CD4-positive, alpha-beta memory T cell (primary cell): ENCODE measurements at regions of chr15 and their contacts with region 1.

Region 1: DNA sequence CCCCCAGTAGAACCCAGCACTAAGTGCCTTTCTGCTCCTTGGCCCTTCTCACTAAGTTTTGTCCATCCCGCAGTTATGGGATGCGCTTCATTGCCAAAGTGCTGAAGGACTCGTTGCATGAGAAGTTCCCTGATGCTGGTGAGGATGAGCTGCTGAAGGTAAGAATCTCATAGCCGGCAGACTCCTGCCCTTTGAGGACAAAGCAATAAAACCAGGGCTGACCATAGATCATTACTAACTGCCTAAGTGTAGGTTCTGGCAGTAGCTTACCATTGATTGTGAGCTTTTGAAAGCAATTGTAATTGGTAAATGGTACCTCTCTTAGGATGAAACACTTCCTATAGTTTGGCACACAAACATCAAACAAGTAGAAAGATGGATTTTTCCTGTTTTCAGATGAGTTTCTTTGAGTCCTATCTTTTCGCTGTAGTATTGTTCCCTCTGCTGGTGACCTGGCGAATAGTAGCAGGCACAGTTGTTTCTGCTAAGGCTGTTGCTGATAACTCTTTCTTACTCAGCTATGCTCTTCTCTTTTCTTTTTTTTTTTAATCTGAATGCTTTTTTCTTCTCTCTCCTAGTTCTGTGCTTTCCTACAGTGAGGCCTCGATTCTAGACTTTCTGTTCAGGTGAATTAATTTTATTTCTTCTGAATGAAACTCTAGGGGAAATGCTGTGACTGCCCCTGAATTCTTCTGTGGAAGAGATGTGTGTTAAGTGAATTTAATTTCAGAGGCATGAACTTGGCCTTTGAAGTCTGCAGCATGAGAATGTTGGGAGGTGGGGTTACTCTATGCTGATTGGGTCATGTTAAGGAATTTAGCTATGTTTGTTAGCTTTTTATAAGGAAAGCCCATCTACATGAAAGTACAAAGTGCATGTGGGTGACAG is 47.4 kb upstream of the CRTC3 start:
- DNase-seq: peak; percentile 30 to 48 (median 47)
- H3K4me3 ChIP-seq: no peak overlapping the region
- H3K4me3 Mint-ChIP-seq: no peak overlapping the region
- H3K27ac ChIP-seq: no peak overlapping the region
- H3K27ac Mint-ChIP-seq: peak overlapping the region in 3 of 7 donors; percentile 59 to 73 (median 62)
- H3K4me1 ChIP-seq: peaks cover 33% of the 10 kb centered on the region
- H3K4me1 Mint-ChIP-seq: peaks cover 24 to 47% (median 37%) of the 10 kb centered on the region in 4 donors
- H3K27me3 ChIP-seq: no peaks in the 10 kb centered on the region
- H3K27me3 Mint-ChIP-seq: no peaks in the 10 kb centered on the region

Region 2: DNA sequence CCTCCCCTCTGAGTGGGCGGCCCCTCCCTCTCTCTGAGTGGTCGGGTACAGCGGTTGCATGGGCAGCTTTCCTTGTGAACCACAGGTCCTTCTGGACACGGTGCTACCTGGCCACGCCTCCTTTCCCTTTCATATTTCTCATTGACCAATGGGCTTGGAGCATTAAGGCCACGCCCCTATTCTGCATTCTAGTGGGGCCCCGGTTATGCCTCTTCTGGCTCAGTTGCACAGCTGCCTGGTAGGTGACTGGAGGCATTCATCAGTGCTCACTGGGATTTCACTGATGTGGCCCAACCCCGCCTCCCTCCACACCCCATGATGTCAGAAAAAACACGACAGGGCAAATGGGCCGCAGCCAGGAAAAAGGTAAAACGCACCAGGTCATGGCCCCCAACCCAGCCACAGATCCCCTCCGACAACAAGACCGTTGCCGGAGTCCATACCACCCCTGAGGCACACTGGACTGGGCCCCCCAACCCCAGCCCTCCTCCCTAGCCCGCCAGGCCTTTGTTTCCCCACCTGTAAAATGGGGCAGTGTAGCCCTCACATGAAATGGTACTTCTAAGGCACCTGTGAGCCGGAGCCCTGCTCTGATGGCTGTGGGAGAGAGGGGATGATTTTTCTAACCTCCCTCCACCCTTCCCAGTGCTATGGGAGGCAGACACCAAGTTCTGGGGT is 190.6 kb before region 1 on chr15:
- CTCF ChIA-PET with region 1: interaction called, 8 read pairs
- POLR2A ChIA-PET with region 1: interaction called, 3 read pairs
- intact Hi-C with region 1: loop called (anchors 1 kb)
- DNase-seq: no peak
- H3K4me3 ChIP-seq: no peak overlapping the region
- H3K4me3 Mint-ChIP-seq: no peak overlapping the region
- H3K27ac ChIP-seq: no peak overlapping the region
- H3K27ac Mint-ChIP-seq: peak overlapping the region in 1 of 7 donors; percentile 22
- H3K4me1 ChIP-seq: peaks cover 4% of the 10 kb centered on the region
- H3K4me1 Mint-ChIP-seq: peaks cover 3 to 7% (median 6%) of the 10 kb centered on the region in 4 donors
- H3K27me3 ChIP-seq: no peaks in the 10 kb centered on the region
- H3K27me3 Mint-ChIP-seq: no peaks in the 10 kb centered on the region

Region 3: GRCh38 chr15:90325726-90326125 is 156.6 kb before region 1 on chr15:
- CTCF ChIA-PET with region 1: interaction called, 170 read pairs
- POLR2A ChIA-PET with region 1: no interaction called
- intact Hi-C with region 1: loop called (anchors 1 kb)
- DNase-seq: no peak
- H3K4me3 ChIP-seq: no peak overlapping the region
- H3K4me3 Mint-ChIP-seq: no peak overlapping the region
- H3K27ac ChIP-seq: no peak overlapping the region
- H3K27ac Mint-ChIP-seq: peak overlapping the region in 1 of 7 donors; percentile 35
- H3K4me1 ChIP-seq: no peaks in the 10 kb centered on the region
- H3K4me1 Mint-ChIP-seq: no peaks in the 10 kb centered on the region
- H3K27me3 ChIP-seq: no peaks in the 10 kb centered on the region
- H3K27me3 Mint-ChIP-seq: no peaks in the 10 kb centered on the region

Region 4: DNA sequence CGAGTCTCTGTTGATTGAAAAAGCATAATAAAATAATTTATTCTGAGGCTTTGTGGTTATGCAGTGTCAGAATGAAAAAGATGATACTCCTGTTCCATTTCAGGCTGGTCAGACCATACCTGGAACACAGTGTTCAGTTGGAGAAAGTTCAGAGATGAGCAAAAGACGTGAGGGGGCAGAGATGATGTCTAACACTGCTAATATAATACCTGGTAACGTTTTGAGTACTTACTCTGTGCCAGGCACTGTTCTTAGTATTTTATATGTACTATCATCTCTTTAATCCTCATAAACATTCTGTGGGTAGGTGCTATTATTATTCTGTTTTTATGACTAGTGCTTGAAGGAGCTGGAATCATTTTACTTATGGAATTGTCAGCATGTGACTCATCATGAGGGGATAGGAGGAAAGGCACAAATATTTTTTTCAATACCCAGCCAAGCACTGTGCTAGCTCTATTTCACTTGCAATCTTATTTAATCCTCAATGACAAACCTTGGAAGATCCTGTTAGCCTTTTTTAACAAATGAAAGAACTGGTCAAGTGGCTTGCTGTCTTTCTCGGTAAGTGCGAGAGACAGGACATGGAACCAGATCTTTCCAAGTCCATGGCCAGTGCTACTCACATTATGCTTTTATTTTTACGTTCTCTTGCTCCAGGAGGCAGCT is 62.5 kb before region 1 on chr15:
- CTCF ChIA-PET with region 1: interaction called, 11 read pairs
- POLR2A ChIA-PET with region 1: no interaction called
- intact Hi-C with region 1: loop called (anchors 10 kb)
- DNase-seq: no peak
- H3K4me3 ChIP-seq: no peak overlapping the region
- H3K4me3 Mint-ChIP-seq: peak overlapping the region in 6 of 8 donors; percentile 1 to 64 (median 60)
- H3K27ac ChIP-seq: no peak overlapping the region
- H3K27ac Mint-ChIP-seq: peak overlapping the region in 6 of 7 donors; percentile 49 to 79 (median 70)
- H3K4me1 ChIP-seq: peaks cover 60% of the 10 kb centered on the region
- H3K4me1 Mint-ChIP-seq: peaks cover 44 to 83% (median 62%) of the 10 kb centered on the region in 4 donors
- H3K27me3 ChIP-seq: no peaks in the 10 kb centered on the region
- H3K27me3 Mint-ChIP-seq: no peaks in the 10 kb centered on the region

Region 5: DNA sequence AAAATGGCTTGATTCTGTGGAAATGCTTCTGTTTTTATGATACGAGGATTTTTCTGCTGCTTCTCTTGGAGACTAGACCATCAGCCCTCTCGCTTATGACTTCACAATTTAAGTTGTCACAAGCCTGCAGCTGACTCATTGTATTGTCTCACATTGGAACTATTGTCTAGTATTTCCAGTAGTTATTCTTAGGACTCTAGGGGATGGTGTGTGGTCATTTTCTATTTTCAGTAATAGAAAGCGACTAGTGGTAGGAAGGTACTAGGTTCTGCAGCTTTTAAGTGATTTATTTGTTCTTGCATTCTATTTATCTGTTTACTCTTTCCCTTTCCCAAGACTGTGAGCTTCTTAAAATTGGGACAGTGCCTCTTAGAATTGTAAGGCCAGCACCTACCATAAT is 19.0 kb before region 1 on chr15:
- CTCF ChIA-PET with region 1: interaction called, 35 read pairs
- POLR2A ChIA-PET with region 1: no interaction called
- intact Hi-C with region 1: no loop called
- DNase-seq: no peak
- H3K4me3 ChIP-seq: no peak overlapping the region
- H3K4me3 Mint-ChIP-seq: no peak overlapping the region
- H3K27ac ChIP-seq: no peak overlapping the region
- H3K27ac Mint-ChIP-seq: peak overlapping the region in 4 of 7 donors; percentile 3 to 33 (median 24)
- H3K4me1 ChIP-seq: no peaks in the 10 kb centered on the region
- H3K4me1 Mint-ChIP-seq: peaks cover 5 to 11% (median 7%) of the 10 kb centered on the region in 4 donors
- H3K27me3 ChIP-seq: no peaks in the 10 kb centered on the region
- H3K27me3 Mint-ChIP-seq: no peaks in the 10 kb centered on the region

Region 6: DNA sequence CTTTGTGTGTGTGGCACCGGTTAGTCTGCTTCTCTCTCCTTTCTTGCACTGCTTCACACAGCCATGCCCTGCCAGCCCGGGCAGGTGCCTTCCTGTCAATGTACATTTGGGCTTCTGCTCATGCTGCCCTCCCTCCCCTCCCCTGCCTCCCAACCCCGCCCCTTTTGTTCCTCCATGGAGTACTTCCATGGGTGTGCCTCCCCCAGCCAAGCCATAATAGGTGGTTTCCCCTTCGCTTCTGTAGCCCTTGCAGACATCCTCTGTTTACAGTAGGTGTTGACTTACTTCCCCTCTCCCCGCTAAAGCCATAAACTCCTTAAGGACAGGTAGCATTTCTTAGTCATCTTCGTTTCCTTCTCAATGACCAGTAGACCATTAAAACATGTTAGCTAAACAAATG is 15.5 kb after region 1 on chr15:
- CTCF ChIA-PET with region 1: interaction called, 17 read pairs
- POLR2A ChIA-PET with region 1: no interaction called
- intact Hi-C with region 1: no loop called
- DNase-seq: no peak
- H3K4me3 ChIP-seq: no peak overlapping the region
- H3K4me3 Mint-ChIP-seq: no peak overlapping the region
- H3K27ac ChIP-seq: no peak overlapping the region
- H3K27ac Mint-ChIP-seq: peak overlapping the region in 1 of 7 donors; percentile 23
- H3K4me1 ChIP-seq: peaks cover 8% of the 10 kb centered on the region
- H3K4me1 Mint-ChIP-seq: peaks cover 8 to 10% (median 9%) of the 10 kb centered on the region in 4 donors
- H3K27me3 ChIP-seq: no peaks in the 10 kb centered on the region
- H3K27me3 Mint-ChIP-seq: no peaks in the 10 kb centered on the region